Right ventricle myocardium inferior (tissue), 1 donor: ENCODE measurements at regions of chr20 and their contacts with region 1.

Region 1: DNA sequence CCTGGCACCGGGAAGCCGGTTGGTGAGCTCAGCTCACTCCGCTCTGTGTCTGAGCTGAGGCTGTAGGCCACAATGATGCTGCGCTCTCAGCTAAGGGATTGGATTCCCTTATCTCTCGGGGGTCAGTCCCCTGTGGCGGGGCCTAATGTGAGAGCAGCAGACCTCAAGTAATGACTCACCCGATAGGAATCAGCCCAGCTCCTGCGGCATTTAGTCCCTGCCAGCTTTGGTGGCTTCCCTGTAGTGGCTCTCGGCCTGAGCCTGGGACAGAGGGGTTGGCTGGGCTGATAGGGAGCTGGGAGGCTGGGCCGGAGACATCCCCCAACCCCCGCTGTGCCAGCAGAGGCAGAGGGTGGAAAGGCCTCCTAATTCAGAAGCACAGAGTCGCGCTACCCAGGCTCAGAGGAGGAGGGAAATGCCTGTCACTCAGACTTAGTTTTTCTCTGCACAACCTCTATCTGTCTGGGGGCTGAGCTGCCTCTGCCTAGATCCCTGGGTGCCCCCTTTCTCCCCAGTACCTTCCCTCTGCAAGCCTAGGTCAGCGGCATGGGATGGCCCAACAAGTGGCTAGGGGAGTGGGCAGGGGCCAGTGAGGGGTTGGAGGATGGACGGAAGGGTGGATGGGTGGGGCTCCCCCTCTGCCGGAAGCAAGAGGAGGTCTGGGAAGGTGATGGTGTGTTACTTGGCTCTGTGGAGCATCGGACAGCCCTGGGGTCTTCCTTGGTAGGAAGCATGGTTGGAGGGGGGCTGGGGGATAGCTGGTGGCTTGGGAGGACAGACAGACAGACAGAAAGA is 92.2 kb downstream of the CDH22 start:
- DNase-seq: no peak
- ATAC-seq: peak; percentile 75

Region 2: GRCh38 chr20:46139908-46140482 is 76.1 kb before region 1 on chr20:
- intact Hi-C with region 1: no loop called
- DNase-seq: no peak
- ATAC-seq: no peak

Region 3: DNA sequence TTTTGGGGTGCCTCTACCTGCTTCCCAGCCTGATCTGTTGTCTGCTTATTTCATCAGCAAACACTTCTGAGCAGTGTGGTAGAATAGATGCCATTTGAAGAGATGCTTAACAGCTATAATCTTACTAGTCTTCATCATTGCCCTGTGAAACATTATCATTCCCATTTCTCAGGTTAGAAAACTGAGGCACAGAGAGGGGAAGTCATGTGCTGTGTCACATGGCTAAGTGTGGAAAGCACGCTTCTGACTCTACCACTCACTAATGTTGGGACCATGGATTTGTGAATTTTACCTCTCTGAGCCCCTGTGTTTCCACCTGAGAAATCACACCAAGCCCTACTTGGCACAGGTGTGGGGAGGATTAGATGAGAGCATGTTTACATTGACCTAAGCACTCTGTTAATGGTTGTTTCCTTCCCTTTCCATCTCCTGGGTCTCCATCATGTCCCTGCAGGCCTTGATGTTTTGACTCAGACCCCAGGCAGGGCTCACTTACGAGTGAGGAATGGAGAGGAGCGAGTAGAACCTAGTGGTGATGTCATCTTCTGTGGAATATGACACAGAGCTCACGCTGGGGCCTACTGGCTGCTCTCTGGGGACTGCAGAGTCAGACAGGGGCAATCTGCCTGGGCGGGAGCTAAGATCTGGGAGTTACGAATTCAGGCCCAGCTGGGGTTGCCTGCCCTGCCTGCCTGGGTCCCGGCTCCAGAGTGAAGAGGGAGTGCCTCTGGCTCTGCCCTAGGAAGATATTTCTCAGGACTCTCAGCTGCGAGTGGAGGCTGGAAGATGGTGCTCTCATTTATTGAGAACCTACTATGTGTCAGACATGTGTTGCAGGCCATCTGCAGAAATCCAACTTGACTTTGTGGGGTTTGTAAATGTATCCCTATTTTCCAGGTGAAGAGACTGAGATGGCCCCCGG is 27.9 kb after region 1 on chr20:
- intact Hi-C with region 1: no loop called
- DNase-seq: no peak
- ATAC-seq: no peak

Region 4: DNA sequence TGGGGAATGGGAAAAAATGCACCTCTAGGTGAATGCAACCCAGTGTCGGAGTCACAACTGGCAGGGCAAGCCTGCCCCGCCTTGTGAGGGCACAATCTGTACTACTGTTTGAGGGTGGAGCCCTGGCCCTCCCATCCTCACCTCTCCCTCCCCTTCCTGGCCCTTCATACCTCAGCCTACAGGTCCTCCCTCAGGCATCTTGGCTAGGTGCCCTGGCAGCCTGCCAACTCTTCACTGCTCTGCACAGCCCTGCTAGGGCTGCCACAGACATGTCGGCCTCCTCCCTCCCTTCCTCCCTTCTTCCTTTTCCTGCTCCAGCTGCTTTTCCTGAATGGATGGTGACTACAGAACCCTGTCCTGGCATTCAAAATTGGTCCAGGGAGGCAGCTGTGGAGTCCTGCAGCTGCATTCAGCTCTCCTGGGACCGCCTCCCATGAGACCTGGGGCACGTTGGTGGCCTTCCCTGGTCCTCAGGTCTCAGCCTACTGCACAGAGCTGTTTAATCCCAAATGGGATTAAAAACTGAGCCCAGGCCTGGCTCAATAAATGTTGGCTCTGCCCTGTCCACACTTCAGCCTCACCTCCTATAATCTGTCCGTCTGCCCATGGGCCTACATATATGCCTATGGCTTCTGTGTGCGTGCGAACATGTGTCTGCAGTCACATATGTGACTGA is 39.5 kb after region 1 on chr20:
- intact Hi-C with region 1: loop called (anchors 5 kb)
- DNase-seq: peak; percentile 87
- ATAC-seq: peak; percentile 66